GM12878 (cell line): ENCODE measurements at regions of chr6 and their contacts with region 1.

Region 1: DNA sequence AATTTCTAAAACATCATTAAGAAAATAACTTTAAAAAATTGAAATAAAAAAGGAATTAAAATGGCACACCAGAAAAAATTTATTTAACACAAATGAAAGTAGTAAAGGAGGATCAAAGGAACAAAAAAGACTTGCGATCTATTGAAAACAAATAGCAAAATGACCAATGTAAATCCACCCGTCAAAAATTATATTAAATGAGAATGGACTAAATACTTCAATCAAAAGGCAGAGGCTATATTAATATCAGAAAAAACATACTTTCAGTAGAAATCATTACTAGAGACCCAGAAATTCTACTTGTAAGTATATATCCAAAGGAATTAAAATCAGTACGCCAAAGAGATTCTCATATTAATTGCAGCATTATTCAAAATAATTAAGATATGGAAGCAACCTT is 293.1 kb upstream of the SOX4 start:
- DNase-seq: no peak
- ATAC-seq: no peak
- H3K4me3 ChIP-seq: no peak overlapping the region
- H3K27ac ChIP-seq: no peak overlapping the region
- H3K4me1 ChIP-seq: no peaks in the 10 kb centered on the region
- H3K27me3 ChIP-seq: no peaks in the 10 kb centered on the region
- CTCF ChIP-seq: no peak
- EP300 ChIP-seq: no peak
- POLR2A ChIP-seq: no peak
- RAD21 ChIP-seq: no peak

Region 2: DNA sequence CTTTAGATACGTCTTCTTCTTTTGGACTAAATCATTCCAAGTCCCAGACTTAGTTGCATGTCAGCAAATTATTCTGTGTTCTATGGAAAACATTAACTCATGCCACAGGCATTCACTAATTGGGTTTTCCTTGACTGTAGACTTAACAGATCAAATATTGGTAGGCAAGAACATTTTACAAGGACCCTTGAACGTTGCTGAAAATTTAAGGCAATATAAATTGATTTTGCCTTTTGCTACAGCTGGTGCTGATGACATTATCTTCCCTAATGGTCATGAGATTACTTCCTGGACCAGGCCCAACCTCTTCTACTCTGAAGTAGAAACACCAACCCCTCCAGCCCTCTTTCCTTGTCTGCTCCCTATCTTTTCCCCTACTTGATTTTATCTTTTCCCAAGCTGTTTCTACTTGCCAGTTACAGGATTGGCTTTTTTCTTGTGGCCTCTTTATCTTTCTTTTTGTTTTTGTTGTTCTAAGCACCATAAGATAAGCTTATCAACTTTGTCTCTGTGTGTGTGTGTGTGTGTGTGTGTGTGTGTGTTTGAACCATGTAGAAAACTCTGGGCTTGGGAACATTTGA is 220.9 kb before region 1 on chr6:
- CTCF ChIA-PET with region 1: no interaction called
- POLR2A ChIA-PET with region 1: no interaction called
- RAD21 ChIA-PET with region 1: no interaction called
- SMC1A ChIA-PET with region 1: no interaction called
- in situ Hi-C with region 1: no loop called
- intact Hi-C with region 1: no loop called
- DNase-seq: no peak
- ATAC-seq: no peak
- H3K4me3 ChIP-seq: no peak overlapping the region
- H3K27ac ChIP-seq: no peak overlapping the region
- H3K4me1 ChIP-seq: no peaks in the 10 kb centered on the region
- H3K27me3 ChIP-seq: no peaks in the 10 kb centered on the region
- CTCF ChIP-seq: no peak
- EP300 ChIP-seq: no peak
- POLR2A ChIP-seq: no peak
- RAD21 ChIP-seq: no peak

Region 3: DNA sequence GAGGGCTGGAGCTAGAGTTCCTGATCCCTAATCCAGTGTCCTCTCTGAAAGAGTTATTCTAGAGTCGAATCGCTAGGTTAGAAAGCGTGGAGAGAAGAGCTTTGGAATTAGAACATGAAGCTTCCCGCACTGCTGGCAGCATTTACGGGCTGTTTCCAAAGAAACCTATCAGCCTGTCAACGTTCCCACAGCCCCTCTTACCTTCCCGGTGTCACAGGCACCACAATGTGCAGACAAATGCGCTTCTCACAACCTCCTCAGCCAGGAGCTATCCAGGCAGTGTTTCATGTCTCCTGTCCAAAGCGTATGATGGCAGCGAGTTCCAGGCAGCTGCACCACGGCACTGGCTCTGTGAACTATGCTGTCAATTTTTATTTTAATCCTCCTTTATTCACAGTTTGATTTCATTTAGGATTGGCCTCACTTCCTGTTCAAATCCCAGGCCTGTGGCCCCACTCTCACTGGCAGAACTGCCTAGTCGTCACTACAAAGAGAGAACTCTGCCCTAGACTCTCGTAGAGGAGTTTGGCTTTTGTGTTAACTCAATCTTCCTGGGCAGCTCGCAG is 29.7 kb before region 1 on chr6:
- CTCF ChIA-PET with region 1: no interaction called
- POLR2A ChIA-PET with region 1: no interaction called
- RAD21 ChIA-PET with region 1: interaction called, 3 read pairs
- SMC1A ChIA-PET with region 1: no interaction called
- in situ Hi-C with region 1: no loop called
- intact Hi-C with region 1: loop called (anchors 1 kb)
- DNase-seq: no peak
- ATAC-seq: no peak
- H3K4me3 ChIP-seq: no peak overlapping the region
- H3K27ac ChIP-seq: no peak overlapping the region
- H3K4me1 ChIP-seq: no peaks in the 10 kb centered on the region
- H3K27me3 ChIP-seq: no peaks in the 10 kb centered on the region
- CTCF ChIP-seq: no peak
- EP300 ChIP-seq: no peak
- POLR2A ChIP-seq: no peak
- RAD21 ChIP-seq: no peak